Transverse colon (tissue), 4 donors: ENCODE measurements at regions of chr22 and their contacts with region 1.

Region 1: GRCh38 chr22:42649246-42650099 is at the start of gene CYB5R3:
- DNase-seq: peak; percentile 88
- H3K4me3 ChIP-seq: peak within 1 kb of the TSS; percentile 58 to 89 (median 76)
- H3K27ac ChIP-seq: peak within 1 kb of the TSS; percentile 90 to 98 (median 95)
- H3K4me1 ChIP-seq: peaks cover 38 to 46% (median 44%) of the 10 kb centered on the region in 4 donors
- H3K27me3 ChIP-seq: no peaks in the 10 kb centered on the region
- CTCF ChIP-seq: no peak
- EP300 ChIP-seq: no peak
- POLR2A ChIP-seq: no peak
- total RNA-seq, gene CYB5R3: 138 to 294 (median 167) TPM

Region 2: GRCh38 chr22:42604403-42604802 is 45.1 kb before region 1 on chr22:
- in situ Hi-C with region 1: no loop called
- intact Hi-C with region 1: no loop called
- DNase-seq: no peak
- H3K4me3 ChIP-seq: no peak overlapping the region
- H3K27ac ChIP-seq: no peak overlapping the region
- H3K4me1 ChIP-seq: peaks cover 10 to 41% (median 21%) of the 10 kb centered on the region in 4 donors
- H3K27me3 ChIP-seq: no peaks in the 10 kb centered on the region
- CTCF ChIP-seq: no peak
- EP300 ChIP-seq: no peak
- POLR2A ChIP-seq: no peak

Region 3: GRCh38 chr22:42856865-42857704 is 207.6 kb after region 1 on chr22 and contains the start of gene ARFGAP3:
- in situ Hi-C with region 1: loop called in 1 of 4 experiments (anchors 25 kb)
- intact Hi-C with region 1: no loop called
- DNase-seq: peak; percentile 96
- H3K4me3 ChIP-seq: peak within 1 kb of the TSS; percentile 35 to 87 (median 85)
- H3K27ac ChIP-seq: peak within 1 kb of the TSS; percentile 94 to 98 (median 97)
- H3K4me1 ChIP-seq: peaks cover 7 to 25% (median 20%) of the 10 kb centered on the region in 4 donors
- H3K27me3 ChIP-seq: no peaks in the 10 kb centered on the region
- CTCF ChIP-seq: no peak
- EP300 ChIP-seq: no peak
- POLR2A ChIP-seq: peak; percentile 81
- total RNA-seq, gene ARFGAP3: 24.3 to 43.5 (median 33.3) TPM

Region 4: GRCh38 chr22:42889304-42889703 is 239.8 kb after region 1 on chr22:
- in situ Hi-C with region 1: no loop called
- intact Hi-C with region 1: no loop called
- DNase-seq: no peak
- H3K4me3 ChIP-seq: no peak overlapping the region
- H3K27ac ChIP-seq: peak overlapping the region in 3 of 4 donors; percentile 34 to 73 (median 42)
- H3K4me1 ChIP-seq: peaks cover 6 to 51% (median 12%) of the 10 kb centered on the region in 4 donors
- H3K27me3 ChIP-seq: no peaks in the 10 kb centered on the region
- CTCF ChIP-seq: no peak
- EP300 ChIP-seq: no peak
- POLR2A ChIP-seq: no peak

Region 5: DNA sequence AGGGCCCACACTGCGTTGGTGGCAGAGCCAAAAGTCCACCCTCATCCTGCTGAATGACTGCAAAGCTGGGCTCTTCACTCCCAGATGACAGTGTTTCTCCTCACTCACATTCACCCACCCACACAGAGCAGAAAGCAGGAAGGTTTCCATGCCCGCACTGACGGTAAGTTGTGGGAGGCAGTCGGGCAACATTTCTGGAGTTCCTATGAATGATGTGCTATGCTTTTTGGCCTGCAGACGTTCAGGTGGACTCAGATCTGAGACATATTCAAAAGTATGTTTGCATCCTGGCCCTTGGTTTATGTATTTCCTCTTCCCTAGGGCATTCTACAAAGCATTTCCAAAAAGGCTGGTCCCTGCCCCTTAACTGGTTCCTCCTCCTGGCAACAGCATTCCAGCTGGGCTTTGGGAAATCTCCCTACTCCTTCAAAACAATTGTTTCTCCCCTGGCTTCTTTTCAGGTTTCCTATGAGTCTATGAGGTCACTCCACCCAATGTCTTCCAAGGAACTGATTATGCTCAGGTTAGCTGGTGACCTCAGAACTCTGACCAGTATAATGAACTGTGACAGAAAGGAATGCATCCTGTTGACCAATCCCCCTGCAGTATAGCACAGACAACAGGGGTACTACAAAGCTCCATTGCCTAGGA is 329.1 kb after region 1 on chr22:
- in situ Hi-C with region 1: no loop called
- intact Hi-C with region 1: no loop called
- DNase-seq: no peak
- H3K4me3 ChIP-seq: no peak overlapping the region
- H3K27ac ChIP-seq: peak overlapping the region; percentile 27 to 61 (median 47)
- H3K4me1 ChIP-seq: peaks cover 28 to 64% (median 42%) of the 10 kb centered on the region in 4 donors
- H3K27me3 ChIP-seq: no peaks in the 10 kb centered on the region
- CTCF ChIP-seq: no peak
- EP300 ChIP-seq: no peak
- POLR2A ChIP-seq: no peak